Motor neuron (in vitro differentiated cells): ENCODE measurements at regions of chr17 and their contacts with region 1.

Region 1: DNA sequence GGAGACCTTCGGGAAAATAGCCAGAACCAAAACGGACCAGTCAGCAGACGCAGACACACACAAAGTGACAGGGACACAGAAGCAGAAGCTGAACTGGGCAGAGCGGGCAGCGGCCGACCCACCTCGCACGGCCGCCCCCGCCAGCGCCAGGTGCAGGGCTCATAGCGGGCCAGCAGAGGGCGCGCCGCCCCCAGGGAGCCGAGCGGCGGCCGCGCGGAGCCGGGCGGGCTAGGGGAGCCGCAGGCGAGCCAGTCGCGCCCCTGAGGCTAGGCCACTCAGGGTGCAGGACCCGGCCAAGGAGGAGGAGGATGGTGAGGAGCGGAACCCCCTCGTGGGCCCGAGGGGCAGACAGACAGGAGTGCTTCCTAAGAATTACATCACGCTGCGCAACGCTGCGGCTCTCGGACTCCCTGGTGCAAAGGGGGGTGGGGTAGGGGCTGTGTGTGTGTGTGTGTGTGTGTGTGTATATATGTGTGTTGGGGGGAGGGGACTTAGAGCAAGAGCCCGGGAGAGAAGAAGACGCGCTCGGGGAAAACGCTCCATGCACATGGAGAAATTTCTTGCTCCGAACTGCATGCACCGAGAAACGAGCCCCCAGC is 913 bp upstream of the NOG start:
- ATAC-seq: peak; percentile 7 to 72 (median 63)
- H3K4me3 ChIP-seq: peak overlapping the region; percentile 52 to 64 (median 58)
- H3K27ac ChIP-seq: peak overlapping the region in 1 of 2 donors; percentile 64
- H3K4me1 ChIP-seq: peaks cover 5 to 15% of the 10 kb centered on the region in 2 donors

Region 2: DNA sequence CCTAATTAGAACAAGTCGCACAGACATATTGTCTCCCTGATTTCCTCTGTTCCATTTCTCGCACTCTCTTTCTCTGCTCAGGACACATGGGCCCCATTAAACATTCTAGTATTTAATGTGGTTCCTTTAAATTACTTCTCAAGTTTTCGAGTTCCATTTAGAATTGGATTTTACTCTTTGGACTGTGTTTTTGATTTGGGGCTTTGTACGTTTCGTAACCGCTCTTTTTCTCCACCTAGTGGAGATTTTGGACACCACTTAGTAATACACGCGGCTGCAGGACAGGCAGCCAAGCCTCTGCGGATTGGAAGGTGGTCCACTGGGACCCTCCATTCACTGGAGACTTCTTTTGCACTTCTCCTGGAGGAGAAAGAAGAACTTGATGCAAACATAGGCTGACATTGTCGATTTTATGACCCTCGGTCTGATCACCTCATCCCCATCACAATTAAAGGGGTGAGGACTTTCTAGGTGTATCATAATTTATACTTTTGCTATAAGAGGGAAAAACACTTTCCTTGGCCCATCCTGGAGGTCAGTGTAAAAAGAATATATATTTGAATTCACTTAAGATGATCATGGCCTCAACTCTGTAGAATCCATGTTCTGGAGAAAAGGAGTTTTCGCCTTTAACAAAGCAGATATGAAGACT is 86.7 kb after region 1 on chr17:
- in situ Hi-C with region 1: loop called in 1 of 9 experiments (anchors 25 kb)
- ATAC-seq: peak; percentile 49 to 89 (median 72)
- H3K4me3 ChIP-seq: peak overlapping the region; percentile 19 to 36 (median 24)
- H3K27ac ChIP-seq: no peak overlapping the region
- H3K4me1 ChIP-seq: peaks cover 2 to 4% of the 10 kb centered on the region in 2 donors

Region 3: GRCh38 chr17:56715613-56716357 is 123.2 kb after region 1 on chr17:
- in situ Hi-C with region 1: loop called in 2 of 9 experiments (anchors 25 kb)
- ATAC-seq: peak; percentile 90 to 100 (median 96)
- H3K4me3 ChIP-seq: no peak overlapping the region
- H3K27ac ChIP-seq: no peak overlapping the region
- H3K4me1 ChIP-seq: no peaks in the 10 kb centered on the region

Region 4: DNA sequence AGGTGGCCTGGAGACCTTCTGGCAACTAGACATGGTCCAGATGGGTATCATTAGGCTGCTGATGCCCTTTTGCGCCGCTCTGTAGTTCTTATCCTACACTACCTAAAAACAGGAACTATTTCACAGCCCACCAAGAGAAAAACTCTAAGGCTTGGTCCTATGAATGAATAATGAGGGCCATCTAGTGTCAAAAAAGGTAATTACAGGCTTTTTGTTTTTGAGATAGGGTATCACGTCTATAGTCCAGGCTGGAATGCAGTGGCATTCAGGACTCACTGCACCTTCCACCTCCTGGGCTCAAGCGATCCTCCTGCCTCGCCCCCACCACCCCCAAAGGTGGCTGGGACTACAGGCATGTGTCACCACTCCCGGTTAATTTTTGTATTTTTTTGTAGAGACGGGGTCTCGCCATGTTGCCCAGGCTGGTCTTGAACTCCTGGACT is 347.3 kb after region 1 on chr17:
- in situ Hi-C with region 1: loop called in 1 of 9 experiments (anchors 25 kb)
- ATAC-seq: peak; percentile 49 to 81 (median 68)
- H3K4me3 ChIP-seq: no peak overlapping the region
- H3K27ac ChIP-seq: no peak overlapping the region
- H3K4me1 ChIP-seq: no peaks in the 10 kb centered on the region